ENCODE measurements at regions of chr12 and their contacts with region 1.

Region 1: DNA sequence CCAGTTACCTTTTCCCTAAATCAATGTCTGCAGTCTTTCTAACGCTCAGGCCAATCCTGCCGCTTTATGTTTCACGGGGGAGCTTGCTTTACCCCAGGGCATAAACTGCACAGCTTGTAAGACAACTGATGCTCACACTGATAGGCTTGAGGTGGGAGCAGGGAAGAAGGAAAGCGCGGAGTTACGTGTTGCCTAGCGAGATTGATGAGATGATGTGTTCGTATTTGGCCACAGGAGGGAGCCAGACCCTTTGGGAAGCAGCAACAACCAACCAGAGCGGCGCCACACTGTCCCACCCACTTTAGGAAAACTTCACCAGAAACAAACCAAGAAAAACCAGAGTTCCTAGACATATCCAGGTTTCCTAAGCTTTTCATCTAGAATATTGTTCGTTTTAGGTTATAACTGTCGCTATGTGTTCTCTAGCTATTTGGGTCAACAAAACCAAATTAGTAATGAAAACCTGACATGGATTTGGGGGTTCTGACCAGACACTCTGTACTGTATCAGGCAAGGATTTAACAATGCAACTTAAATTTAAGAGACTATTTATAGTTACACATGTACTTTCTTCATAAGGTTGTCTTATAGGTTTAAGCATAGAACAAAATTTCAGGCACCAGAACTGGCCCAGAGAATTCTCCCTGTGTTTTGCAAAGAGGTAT is 2.4 kb downstream of the IL26 start:
- DNase-seq: peak; percentile 82
- H3K4me3 ChIP-seq: peak overlapping the region; percentile 38
- H3K27ac ChIP-seq: no peak overlapping the region
- H3K27me3 ChIP-seq: no peaks in the 10 kb centered on the region
- CTCF ChIP-seq: peak; percentile 92

Region 2: DNA sequence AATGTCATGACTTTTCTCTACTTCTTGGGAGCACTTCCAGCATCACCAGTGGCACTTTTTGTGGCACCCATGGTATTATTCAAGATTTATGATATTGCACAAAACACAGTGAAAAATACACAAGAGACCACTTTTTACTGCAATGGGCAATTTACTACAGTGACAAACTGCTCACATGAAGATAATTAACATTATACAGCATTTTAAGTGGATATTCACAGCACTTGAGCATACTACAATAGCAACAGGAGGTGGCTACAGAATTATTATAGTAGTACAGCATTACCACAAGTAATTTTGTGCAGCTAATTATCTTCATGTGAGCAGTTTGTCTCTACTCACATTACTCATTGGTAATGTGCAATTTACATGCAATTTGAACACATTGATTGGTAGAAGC is 15.9 kb before region 1 on chr12:
- CTCF ChIA-PET with region 1: interaction called, 10 read pairs
- POLR2A ChIA-PET with region 1: no interaction called
- DNase-seq: no peak
- H3K4me3 ChIP-seq: no peak overlapping the region
- H3K27ac ChIP-seq: no peak overlapping the region
- H3K27me3 ChIP-seq: peaks cover 3% of the 10 kb centered on the region
- CTCF ChIP-seq: no peak

Region 3: DNA sequence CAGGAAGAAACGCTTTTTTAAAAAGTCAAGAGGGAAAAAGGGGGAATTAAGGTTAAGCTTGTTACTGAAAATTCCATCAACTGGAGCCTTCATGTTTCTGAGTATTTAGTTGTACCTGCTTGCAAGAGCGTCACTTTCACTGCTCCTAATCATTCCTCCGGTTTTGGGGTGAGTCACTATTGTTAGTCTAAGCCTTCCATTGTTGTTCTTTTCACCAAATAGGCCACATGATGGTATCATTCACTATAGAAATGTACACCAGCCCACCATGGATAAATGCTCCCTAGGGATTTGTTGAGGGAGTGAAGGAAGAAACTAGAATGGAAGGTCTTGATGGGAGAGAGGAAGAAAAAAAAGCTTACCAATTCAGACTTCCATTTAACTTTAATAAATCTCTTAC is 27.2 kb after region 1 on chr12:
- CTCF ChIA-PET with region 1: interaction called, 20 read pairs
- POLR2A ChIA-PET with region 1: interaction called, 3 read pairs
- DNase-seq: no peak
- H3K4me3 ChIP-seq: no peak overlapping the region
- H3K27ac ChIP-seq: no peak overlapping the region
- H3K27me3 ChIP-seq: no peaks in the 10 kb centered on the region
- CTCF ChIP-seq: no peak

Region 4: DNA sequence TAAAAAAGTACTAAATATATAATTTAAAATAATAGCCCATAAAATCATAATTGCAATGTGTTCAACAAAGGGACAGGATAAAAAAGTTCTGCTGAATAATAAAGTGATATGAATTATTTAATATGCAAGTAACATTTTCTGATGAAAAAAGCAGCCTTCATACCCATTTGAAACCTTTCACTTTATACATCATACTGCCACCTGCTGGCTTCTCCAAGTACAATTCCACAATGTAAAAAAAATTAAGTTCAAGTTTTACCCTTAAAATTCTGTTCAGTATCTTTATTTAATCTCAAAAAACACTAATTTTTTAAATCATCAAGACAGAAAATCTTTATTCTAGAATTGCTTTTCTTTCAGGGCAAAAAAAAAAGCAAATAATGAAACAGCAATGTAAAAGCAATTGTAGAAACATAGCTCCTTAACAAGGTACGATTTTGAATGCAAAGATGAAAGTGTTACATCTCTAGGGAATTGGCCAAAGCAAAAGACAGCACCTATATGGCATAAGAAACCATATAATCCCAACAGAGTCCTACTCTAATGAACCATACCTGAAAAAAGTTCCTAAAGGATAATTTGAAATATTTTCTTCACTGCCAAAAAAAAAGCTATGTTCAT is 93.9 kb after region 1 on chr12:
- CTCF ChIA-PET with region 1: interaction called, 193 read pairs
- POLR2A ChIA-PET with region 1: no interaction called
- DNase-seq: peak; percentile 15
- H3K4me3 ChIP-seq: no peak overlapping the region
- H3K27ac ChIP-seq: no peak overlapping the region
- H3K27me3 ChIP-seq: no peaks in the 10 kb centered on the region
- CTCF ChIP-seq: peak; percentile 61

Region 5: GRCh38 chr12:68331869-68332727 is 108.9 kb after region 1 on chr12 and contains the start of gene MDM1:
- CTCF ChIA-PET with region 1: interaction called, 10 read pairs
- POLR2A ChIA-PET with region 1: no interaction called
- DNase-seq: peak; percentile 95
- H3K4me3 ChIP-seq: peak within 1 kb of the TSS; percentile 83
- H3K27ac ChIP-seq: no peak within 1 kb of the TSS
- H3K27me3 ChIP-seq: no peaks in the 10 kb centered on the region
- CTCF ChIP-seq: no peak
- polyA plus RNA-seq, gene MDM1: 8.1 and 13.5 TPM in 2 replicates

Measured in AG04450 (cell line).